PC-9 (cell line): ENCODE measurements at regions of chr22 and their contacts with region 1.

Region 1: GRCh38 chr22:36528795-36529751 is at the start of gene EIF3D:
- DNase-seq: peak; percentile 99 to 100
- H3K4me3 ChIP-seq: peak within 1 kb of the TSS; percentile 90
- H3K27ac ChIP-seq: peak within 1 kb of the TSS; percentile 96
- H3K4me1 ChIP-seq: peaks cover 25% of the 10 kb centered on the region
- H3K27me3 ChIP-seq: no peaks in the 10 kb centered on the region
- CTCF ChIP-seq: peak; percentile 37; the same call in 1 of the 2 replicates
- total RNA-seq, gene EIF3D: 270 and 312 TPM in 2 replicates

Region 2: DNA sequence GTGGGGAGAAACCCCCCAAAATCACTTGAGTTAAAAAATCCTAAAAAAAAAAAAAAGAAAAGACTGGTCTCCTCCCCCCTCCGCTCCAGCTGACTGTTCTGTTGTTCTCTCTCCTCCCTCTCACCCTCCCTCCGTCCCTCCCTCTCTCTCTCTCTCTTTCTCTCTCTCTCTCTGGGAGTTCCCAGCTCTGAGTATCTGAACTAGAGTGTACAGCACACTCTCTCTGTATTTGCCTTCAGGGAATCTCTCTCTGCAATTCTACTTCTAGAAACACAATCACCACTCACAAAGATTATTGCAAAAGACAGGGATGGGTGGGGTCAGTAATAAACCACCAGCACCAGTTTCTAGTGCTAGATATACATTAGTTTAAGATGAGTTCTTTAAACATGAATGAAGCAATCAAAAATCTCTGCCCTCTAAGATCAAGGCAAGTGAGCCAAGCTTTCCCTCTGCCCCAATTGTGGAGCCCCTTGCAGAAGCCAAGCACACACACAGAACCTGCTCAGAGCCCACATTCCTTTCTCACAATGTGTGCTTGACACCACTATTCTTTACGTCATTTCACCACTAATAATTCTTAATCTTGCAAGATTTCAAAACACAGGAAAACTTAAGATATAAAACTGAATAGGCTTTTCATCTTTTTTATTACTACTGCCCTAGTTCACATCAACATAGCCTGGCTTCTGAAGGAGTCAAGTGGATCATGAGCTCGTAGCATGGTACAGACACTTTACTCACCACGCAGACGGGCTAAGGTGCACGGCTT is 634.0 kb before region 1 on chr22:
- CTCF ChIA-PET with region 1: no interaction called
- POLR2A ChIA-PET with region 1: interaction called, 10 read pairs
- intact Hi-C with region 1: no loop called
- DNase-seq: peak; percentile 49 to 100
- H3K4me3 ChIP-seq: peak overlapping the region; percentile 33; the same call in 1 of the 2 replicates
- H3K27ac ChIP-seq: peak overlapping the region; percentile 94
- H3K4me1 ChIP-seq: peaks cover 52% of the 10 kb centered on the region
- H3K27me3 ChIP-seq: no peaks in the 10 kb centered on the region
- CTCF ChIP-seq: peak; percentile 54

Region 3: DNA sequence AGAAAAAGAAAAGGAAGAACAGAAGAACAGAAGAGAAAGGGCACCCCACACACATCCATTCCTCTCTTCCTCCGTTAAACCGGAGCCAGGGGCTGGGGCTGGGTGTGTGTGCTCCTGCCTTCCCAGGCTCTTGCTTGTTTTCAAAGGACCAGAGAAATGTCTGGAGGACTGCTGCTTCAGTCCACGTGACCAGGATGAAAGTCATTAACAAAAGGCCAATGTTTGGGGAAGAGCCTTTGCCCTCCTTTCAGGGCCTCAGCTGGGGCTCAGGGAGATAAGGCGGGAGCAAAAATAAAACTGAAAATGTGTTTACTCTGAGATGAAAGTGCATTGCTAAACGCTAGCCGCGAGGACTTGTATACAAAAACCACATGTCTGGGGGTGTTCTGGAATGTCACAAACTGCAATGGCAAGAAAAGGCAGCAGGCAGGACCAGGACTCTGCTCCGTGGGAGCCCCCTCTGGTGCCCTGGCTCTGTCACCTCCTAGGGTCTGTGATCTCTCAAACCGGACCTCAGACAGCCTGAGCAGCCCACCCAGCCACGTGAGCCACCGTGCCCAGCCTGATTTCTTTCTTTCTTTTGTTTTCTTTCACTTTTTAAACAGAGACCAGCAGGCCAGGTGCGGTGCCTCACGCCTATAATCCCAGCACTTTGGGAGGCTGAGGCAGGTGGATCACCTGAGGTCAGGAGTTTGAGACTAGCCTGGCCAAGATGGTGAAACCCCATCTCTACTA is 109.7 kb before region 1 on chr22:
- CTCF ChIA-PET with region 1: no interaction called
- POLR2A ChIA-PET with region 1: interaction called, 22 read pairs
- intact Hi-C with region 1: no loop called
- DNase-seq: peak; percentile 44 to 93
- H3K4me3 ChIP-seq: peak overlapping the region; percentile 35; the same call in 1 of the 2 replicates
- H3K27ac ChIP-seq: peak overlapping the region; percentile 66
- H3K4me1 ChIP-seq: peaks cover 43% of the 10 kb centered on the region
- H3K27me3 ChIP-seq: no peaks in the 10 kb centered on the region
- CTCF ChIP-seq: no peak

Region 4: GRCh38 chr22:36606114-36606513 is 77.0 kb after region 1 on chr22:
- CTCF ChIA-PET with region 1: no interaction called
- POLR2A ChIA-PET with region 1: interaction called, 17 read pairs
- intact Hi-C with region 1: no loop called
- DNase-seq: no peak
- H3K4me3 ChIP-seq: no peak overlapping the region
- H3K27ac ChIP-seq: no peak overlapping the region
- H3K4me1 ChIP-seq: peaks cover 10% of the 10 kb centered on the region
- H3K27me3 ChIP-seq: peaks cover 98% of the 10 kb centered on the region
- CTCF ChIP-seq: no peak

Region 5: DNA sequence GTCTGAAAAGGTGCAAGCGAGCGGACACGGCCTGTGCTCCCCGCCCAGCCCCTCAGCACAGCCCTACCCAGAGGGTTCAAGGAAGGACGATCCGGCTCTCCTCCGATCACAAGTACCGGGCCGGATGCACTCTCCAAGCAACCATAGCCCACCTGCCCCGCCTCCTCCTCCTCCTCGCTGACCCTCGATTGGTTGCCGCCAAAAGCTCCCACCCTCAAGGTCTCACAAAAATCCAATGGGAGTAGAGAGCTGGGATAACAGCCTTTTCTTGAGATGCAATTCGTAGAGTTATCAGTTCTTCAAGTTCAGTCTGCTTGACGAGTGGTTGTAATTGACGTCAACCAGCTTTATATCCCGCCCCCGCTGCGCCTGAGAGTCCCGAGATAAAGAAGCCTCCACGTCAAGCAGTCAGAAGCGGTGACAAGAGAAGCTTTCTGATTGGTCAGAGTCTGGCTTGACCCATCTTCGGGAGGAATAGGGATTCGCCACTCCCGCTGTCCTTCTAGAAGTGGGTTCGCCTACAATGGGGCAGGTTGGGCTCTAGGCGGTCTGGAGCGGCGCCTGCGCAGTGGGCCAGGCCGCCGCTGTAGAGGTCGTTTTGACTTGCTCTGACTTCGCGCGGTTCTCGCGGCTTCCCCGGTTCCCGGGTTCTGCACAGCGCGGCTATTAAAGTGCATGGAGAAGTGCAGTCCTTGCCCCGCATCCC is 247.0 kb after region 1 on chr22 and contains the start of gene IFT27:
- CTCF ChIA-PET with region 1: interaction called, 11 read pairs
- POLR2A ChIA-PET with region 1: interaction called, 9 read pairs
- intact Hi-C with region 1: no loop called
- DNase-seq: peak; percentile 99 to 100
- H3K4me3 ChIP-seq: peak within 1 kb of the TSS; percentile 76
- H3K27ac ChIP-seq: no peak within 1 kb of the TSS
- H3K4me1 ChIP-seq: peaks cover 13% of the 10 kb centered on the region
- H3K27me3 ChIP-seq: no peaks in the 10 kb centered on the region
- CTCF ChIP-seq: no peak
- total RNA-seq, gene IFT27: 74.2 and 84.2 TPM in 2 replicates

Region 6: GRCh38 chr22:36998620-36999340 is 469.7 kb after region 1 on chr22:
- CTCF ChIA-PET with region 1: interaction called, 11 read pairs
- POLR2A ChIA-PET with region 1: no interaction called
- intact Hi-C with region 1: no loop called
- DNase-seq: no peak
- H3K4me3 ChIP-seq: no peak overlapping the region
- H3K27ac ChIP-seq: no peak overlapping the region
- H3K4me1 ChIP-seq: peaks cover 17% of the 10 kb centered on the region
- H3K27me3 ChIP-seq: no peaks in the 10 kb centered on the region
- CTCF ChIP-seq: peak; percentile 52